GM18951 (cell line): ENCODE measurements at regions of chr5 and their contacts with region 1.

Region 1: DNA sequence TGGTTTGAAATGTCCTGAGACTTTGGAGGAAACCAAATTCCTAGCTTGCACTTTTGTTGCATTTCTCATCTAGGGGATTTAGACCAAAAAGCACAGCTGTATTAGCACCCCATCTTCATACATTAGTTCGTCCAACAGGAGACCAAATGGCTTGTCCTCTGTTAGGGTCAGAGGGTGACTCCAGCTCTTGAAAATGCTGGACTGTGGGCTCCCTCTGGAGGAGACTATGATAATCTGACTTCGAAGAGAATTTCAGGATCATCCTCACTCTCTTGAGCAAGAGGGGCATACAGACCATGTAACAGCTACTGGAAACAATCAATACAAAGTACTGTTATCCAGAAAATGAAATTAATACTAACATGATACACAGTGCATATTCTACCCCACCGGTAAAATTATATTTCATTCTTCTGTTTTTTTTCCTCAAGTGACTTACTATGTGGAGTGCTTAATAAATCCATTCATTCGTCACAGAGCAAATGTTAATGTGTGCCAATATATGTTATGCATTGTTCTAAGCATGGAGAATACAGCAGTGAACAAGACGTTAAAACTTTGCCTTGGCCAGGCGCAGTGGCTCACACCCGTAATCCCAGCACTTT is 63.7 kb upstream of the PPP2CA start:
- POLR2A ChIP-seq: no peak

Region 2: DNA sequence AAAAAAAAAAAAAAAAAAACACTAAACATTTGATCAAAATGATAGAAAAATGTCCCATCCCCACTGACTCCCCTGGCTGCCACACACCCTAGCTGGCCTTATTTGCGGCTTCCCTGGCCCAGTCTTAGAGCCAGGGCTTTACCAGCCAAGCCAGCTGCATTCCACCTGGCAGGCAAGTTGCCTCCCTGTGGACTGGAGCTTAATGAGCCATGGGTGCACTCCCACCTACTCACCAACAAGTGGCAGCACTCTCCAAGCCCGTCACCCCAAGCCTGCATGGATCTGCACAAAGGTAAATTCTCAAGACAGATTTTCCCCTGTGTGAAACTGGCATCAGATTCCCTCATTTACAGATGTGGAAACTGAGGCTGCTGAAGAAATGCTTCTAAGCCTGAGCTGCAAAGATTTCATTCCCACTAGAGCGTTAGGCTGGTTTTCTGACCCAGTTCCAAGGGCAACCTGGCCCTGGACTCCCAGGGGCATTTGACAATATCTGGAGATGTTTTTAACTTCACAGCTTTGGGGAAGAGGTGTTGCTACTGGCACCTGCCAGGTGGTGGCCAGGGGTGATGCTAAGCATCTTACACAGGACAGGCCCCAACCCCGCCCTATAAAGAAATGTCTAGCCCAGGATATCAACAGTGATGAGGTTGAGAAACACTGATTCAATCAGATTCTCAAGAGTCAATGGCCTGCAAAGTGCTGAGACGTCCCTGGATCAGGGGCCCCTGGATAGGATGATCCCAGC is 262.9 kb before region 1 on chr5:
- in situ Hi-C with region 1: loop called (anchors 25 kb)
- POLR2A ChIP-seq: no peak

Region 3: GRCh38 chr5:134188092-134188491 is 101.5 kb before region 1 on chr5:
- in situ Hi-C with region 1: loop called (anchors 5 kb)
- POLR2A ChIP-seq: no peak

Region 4: DNA sequence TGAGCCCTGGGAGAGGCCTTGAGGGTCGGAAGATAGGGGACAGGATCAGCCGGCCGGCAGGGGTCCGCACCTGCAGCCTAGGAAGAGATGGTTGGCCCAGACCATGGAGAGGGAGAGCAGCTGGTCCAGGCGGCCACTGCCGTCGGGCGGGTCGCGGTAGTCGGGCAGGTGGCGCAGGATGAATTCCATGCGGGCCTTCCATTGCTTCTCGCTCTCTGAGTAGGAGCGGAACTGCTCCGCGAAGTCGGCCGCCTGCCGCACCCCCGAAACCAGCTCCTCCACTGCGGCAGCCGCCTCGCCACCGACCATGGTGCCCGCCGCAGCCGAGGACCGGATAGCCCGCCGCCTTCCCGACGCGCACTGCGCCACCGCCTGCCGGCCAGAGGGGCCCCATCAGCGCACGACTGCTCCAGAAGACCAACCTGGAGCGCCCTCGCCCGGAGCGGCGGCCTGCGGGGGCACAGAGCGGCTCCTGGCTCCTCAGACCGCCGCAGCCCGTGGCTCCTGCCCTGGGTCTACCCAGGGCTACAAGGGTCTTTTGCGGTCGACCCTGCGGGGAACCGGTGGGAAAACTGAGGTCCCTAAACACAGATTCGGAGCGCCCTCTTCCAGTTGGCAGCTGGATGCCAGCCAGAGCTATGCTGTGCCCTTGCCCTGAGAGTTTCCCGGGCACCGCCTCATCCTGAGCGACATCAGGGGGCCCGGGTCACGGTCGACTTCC is 122.1 kb after region 1 on chr5 and contains the start of gene CDKN2AIPNL:
- in situ Hi-C with region 1: no loop called
- POLR2A ChIP-seq: peak; percentile 88